Endothelial cell of umbilical vein (primary cell): ENCODE measurements at regions of chr11 and their contacts with region 1.

Region 1: DNA sequence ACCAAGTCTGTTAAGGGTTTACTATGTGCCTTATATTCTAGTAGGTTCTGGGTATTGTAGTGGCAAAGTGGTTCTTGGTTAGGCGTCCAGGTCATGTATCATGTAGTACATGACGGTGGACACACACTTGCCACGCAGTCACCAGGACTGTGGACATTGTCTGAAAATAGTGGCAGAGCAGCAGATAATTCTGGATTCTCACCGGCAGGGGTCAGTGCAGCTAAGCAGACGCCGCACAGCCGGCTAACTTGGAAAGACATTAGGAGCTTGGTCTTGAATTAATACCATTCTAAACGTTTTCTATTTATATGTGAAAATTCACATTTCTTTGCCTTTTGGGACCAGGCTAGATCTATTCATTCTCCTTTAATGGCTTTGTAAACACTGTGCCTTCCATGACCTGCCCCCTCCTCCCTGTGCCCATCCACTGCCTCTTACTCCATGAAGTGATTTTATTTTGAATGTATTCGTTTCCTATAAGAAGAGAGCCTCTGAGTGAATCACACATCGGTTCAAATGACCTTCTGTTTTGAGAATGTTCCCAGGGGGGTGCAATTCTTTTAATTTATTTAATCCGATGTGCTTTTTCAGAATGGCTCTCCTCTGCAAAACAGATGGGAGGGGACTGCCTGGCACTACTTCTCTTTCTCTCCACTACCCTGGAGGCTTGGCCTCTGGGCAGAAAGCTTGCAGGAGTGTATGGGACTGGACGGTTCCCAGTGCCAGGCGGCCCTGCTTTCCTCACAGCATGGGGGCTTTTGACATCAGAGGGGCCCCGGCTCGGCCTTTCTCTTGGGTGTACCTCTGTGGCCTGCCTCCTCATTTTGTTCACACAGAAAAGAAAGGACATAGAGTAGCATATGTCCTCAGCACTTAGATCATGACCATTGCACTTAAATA is 378.0 kb downstream of the NTM start:
- DNase-seq: peak; percentile 85
- H3K4me3 ChIP-seq: no peak overlapping the region
- H3K27ac ChIP-seq: peak overlapping the region; percentile 92
- H3K4me1 ChIP-seq: peaks cover 56% of the 10 kb centered on the region
- H3K27me3 ChIP-seq: no peaks in the 10 kb centered on the region
- CTCF ChIP-seq: peak; percentile 83 to 84
- POLR2A ChIP-seq: no peak

Region 2: DNA sequence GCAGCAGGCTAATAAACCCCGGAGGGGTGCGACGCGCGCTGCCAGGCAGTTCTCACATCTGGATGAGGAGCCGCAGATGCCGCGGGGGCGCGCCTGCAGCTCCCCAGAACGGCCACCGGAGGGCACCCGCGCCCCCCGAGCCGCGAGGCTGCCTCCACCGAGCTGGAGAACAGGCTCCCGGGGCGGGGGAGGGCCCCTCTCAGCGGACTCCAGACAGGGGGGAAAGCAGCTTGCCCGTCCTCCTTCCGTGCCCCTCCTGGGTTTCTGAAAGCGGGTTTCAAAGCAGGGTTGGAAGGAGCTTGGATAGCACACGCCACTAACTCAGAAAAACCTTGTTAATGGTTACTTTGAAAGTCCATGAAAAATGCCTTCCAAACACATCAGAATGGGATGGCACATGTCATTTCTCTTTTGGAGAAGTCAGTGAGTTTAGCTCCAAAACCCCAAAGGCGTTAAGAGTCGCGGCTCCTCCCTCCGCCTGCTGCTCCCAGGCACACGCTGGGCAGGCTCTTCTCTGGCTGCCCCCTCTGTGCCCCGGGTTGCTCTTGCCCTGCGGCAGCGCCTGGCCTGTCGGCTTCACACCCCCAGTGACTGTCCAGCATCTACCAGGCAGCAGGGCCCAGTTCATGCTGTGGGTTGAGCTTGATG is 60.2 kb before region 1 on chr11:
- CTCF ChIA-PET with region 1: interaction called, 135 read pairs
- POLR2A ChIA-PET with region 1: no interaction called
- dilution Hi-C with region 1: no loop called
- intact Hi-C with region 1: loop called (anchors 1 kb)
- DNase-seq: peak; percentile 54
- H3K4me3 ChIP-seq: no peak overlapping the region
- H3K27ac ChIP-seq: no peak overlapping the region
- H3K4me1 ChIP-seq: no peaks in the 10 kb centered on the region
- H3K27me3 ChIP-seq: peaks cover 0 to 2% of the 10 kb centered on the region in 2 experiments
- CTCF ChIP-seq: peak; percentile 90 to 95
- POLR2A ChIP-seq: no peak

Region 3: GRCh38 chr11:131737357-131737756 is 11.0 kb before region 1 on chr11:
- CTCF ChIA-PET with region 1: interaction called, 13 read pairs
- POLR2A ChIA-PET with region 1: no interaction called
- dilution Hi-C with region 1: no loop called
- intact Hi-C with region 1: no loop called
- DNase-seq: no peak
- H3K4me3 ChIP-seq: no peak overlapping the region
- H3K27ac ChIP-seq: no peak overlapping the region
- H3K4me1 ChIP-seq: peaks cover 6% of the 10 kb centered on the region
- H3K27me3 ChIP-seq: no peaks in the 10 kb centered on the region
- CTCF ChIP-seq: no peak
- POLR2A ChIP-seq: no peak

Region 4: DNA sequence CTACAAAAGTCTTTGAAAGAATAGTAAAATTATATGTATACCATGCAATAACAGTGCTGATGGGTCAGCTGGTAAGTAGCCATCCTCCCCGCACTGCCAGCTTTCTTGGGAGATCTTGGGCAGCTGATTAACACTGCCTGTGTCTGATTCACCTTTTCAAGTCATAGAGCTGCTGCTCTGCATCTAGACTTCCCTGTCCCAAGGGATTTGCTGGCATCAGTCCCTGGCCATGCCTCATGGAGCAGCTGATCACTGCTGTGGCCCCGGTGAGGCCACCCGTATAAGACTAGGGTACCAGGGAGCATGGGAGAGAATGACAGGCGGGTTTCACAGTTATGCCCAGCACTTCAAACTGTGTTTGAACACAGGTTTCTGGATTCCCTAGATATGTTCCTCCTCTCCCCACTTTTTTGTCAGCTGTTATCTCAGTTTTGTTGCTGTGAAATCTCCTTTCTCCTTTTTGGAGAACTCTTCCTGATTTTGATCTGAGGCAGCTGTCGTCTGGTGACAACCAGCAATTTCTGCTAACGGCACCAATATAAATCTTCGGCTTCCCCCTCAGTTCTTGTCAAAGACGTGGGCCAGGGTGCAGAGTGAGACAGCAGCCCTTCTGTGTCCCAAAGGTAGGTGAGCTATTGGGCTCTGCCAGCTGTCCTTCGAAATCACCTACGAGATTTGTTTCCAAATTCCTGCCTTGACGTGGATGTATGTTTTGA is 61.0 kb after region 1 on chr11:
- CTCF ChIA-PET with region 1: interaction called, 39 read pairs
- POLR2A ChIA-PET with region 1: no interaction called
- dilution Hi-C with region 1: no loop called
- intact Hi-C with region 1: loop called (anchors 1 kb)
- DNase-seq: no peak
- H3K4me3 ChIP-seq: no peak overlapping the region
- H3K27ac ChIP-seq: no peak overlapping the region
- H3K4me1 ChIP-seq: peaks cover 11% of the 10 kb centered on the region
- H3K27me3 ChIP-seq: peaks cover 0 to 6% of the 10 kb centered on the region in 2 experiments
- CTCF ChIP-seq: no peak
- POLR2A ChIP-seq: no peak

Region 5: GRCh38 chr11:131889146-131889577 is 140.8 kb after region 1 on chr11:
- CTCF ChIA-PET with region 1: interaction called, 13 read pairs
- POLR2A ChIA-PET with region 1: no interaction called
- dilution Hi-C with region 1: no loop called
- intact Hi-C with region 1: no loop called
- DNase-seq: no peak
- H3K4me3 ChIP-seq: no peak overlapping the region
- H3K27ac ChIP-seq: peak overlapping the region; percentile 45
- H3K4me1 ChIP-seq: peaks cover 13% of the 10 kb centered on the region
- H3K27me3 ChIP-seq: peaks cover 0 to 2% of the 10 kb centered on the region in 2 experiments
- CTCF ChIP-seq: no peak
- POLR2A ChIP-seq: no peak

Region 6: DNA sequence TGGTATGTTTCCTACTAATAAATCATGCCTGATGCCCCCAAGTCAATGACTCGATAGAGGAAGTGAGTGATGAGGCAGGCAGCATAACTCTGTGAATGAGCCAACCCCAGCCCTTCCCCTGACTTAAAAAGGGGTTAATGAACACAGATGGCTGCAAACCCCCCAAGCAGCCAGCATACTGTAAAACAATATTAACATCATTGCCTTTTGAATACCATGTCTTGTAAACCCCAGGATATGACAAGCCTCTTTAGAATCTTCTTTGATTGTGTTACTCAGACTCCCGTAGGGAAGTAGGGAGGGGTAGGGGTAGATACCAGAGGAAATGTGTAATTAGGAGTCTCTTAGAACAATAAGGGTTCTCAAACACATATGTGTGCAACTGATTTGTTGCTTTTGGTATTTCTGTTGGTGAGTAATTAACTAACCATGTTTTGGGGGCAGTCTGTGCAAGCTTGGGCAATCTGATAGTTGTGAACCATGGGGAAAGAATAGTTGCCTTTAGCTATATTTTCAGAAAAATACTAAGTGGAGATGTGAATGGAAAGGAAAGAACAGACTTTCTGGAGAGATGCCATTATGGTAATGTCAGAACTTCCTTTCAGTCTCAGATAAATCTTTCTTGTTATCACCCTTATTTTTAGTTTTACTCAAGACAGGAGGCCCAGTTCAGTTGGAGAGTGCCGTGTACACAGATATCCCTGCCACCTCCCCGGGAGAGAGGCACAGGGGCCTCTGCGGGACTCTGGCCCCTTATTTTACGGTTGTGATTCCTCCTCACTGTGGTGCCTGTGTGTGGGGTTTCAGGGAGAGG is 323.9 kb after region 1 on chr11:
- CTCF ChIA-PET with region 1: interaction called, 5 read pairs
- POLR2A ChIA-PET with region 1: interaction called, 6 read pairs
- dilution Hi-C with region 1: no loop called
- intact Hi-C with region 1: loop called (anchors 1 kb)
- DNase-seq: peak; percentile 96
- H3K4me3 ChIP-seq: no peak overlapping the region
- H3K27ac ChIP-seq: peak overlapping the region; percentile 99
- H3K4me1 ChIP-seq: peaks cover 32% of the 10 kb centered on the region
- H3K27me3 ChIP-seq: no peaks in the 10 kb centered on the region
- CTCF ChIP-seq: no peak
- POLR2A ChIP-seq: peak; percentile 68

Region 7: GRCh38 chr11:132941024-132941646 is 1192.7 kb after region 1 on chr11:
- CTCF ChIA-PET with region 1: interaction called, 27 read pairs
- POLR2A ChIA-PET with region 1: no interaction called
- dilution Hi-C with region 1: no loop called
- intact Hi-C with region 1: no loop called
- DNase-seq: peak; percentile 19
- H3K4me3 ChIP-seq: no peak overlapping the region
- H3K27ac ChIP-seq: no peak overlapping the region
- H3K4me1 ChIP-seq: no peaks in the 10 kb centered on the region
- H3K27me3 ChIP-seq: peaks cover 10 to 17% of the 10 kb centered on the region in 2 experiments
- CTCF ChIP-seq: peak; percentile 67 to 71
- POLR2A ChIP-seq: no peak